ENCODE measurements at regions of chr1 and their contacts with region 1.

Region 1: GRCh38 chr1:40662864-40663263 is 2.6 kb downstream of the RIMS3 start:
- DNase-seq: no peak
- H3K4me3 ChIP-seq: no peak overlapping the region
- H3K27ac ChIP-seq: no peak overlapping the region
- H3K4me1 ChIP-seq: peaks cover 0 to 28% (median 15%) of the 10 kb centered on the region in 4 experiments; a peak in 6 of 7 replicates
- H3K27me3 ChIP-seq: no peaks in the 10 kb centered on the region; a peak in 1 of 7 replicates
- CTCF ChIP-seq: no peak
- EP300 ChIP-seq: no peak
- POLR2A ChIP-seq: no peak
- RAD21 ChIP-seq: no peak

Region 2: DNA sequence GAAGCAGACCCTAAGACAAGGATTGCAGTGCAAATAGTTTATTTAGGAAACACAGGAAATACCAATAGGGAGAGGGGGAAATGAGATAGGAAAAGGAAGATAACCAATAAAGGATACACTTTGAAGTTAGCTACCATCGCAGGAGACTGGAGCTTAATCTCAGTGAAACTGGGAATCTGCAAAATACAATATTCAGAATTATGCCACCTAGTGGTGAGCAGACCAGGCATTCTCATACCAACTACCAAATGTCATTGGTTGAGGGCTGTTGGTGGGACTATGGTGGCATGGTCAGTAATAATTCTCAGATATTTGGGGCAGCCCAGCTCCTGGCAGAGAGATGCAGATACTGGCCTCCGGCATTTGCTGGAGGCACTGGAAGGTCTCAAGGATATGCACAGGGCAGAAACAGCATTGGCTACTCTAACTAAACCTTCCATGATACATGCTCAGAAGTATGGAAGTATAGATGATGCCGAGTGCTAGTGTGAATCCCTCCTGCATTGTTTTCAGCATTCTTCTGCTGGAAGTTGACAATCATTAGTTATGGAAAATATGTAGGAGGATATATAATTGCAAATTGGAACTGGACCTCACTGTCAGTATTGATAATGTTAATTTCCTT is 224.4 kb before region 1 on chr1:
- CTCF ChIA-PET with region 1: no interaction called
- POLR2A ChIA-PET with region 1: no interaction called
- DNase-seq: no peak
- H3K4me3 ChIP-seq: no peak overlapping the region
- H3K27ac ChIP-seq: no peak overlapping the region
- H3K4me1 ChIP-seq: no peaks in the 10 kb centered on the region
- H3K27me3 ChIP-seq: no peaks in the 10 kb centered on the region
- CTCF ChIP-seq: peak; percentile 18 to 76 (median 53)
- EP300 ChIP-seq: no peak
- POLR2A ChIP-seq: no peak
- RAD21 ChIP-seq: peak; percentile 17 to 44; a peak in 3 of 4 replicates

Region 3: DNA sequence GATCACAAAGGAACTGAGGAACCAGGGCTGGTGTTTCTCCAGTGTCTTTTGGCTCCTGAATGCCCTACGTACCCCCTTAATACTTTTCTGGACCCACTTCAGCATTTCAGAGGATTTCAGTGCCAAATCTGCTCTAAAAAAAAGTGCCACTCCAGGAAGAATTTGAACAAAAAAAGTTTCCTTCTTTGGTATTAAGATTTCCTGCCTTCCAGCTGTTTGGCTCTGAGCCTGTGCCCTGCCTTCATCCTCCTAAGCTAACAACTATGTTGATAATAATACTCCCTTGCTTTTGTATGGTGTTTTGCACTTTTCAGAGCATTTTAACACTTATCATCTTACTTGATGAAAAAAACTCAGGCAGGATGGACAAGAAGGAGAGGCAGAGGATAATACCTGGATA is 13.6 kb after region 1 on chr1:
- CTCF ChIA-PET with region 1: interaction called, 12 read pairs
- POLR2A ChIA-PET with region 1: interaction called, 3 read pairs
- DNase-seq: no peak
- H3K4me3 ChIP-seq: no peak overlapping the region
- H3K27ac ChIP-seq: no peak overlapping the region
- H3K4me1 ChIP-seq: no peaks in the 10 kb centered on the region
- H3K27me3 ChIP-seq: no peaks in the 10 kb centered on the region
- CTCF ChIP-seq: no peak
- EP300 ChIP-seq: no peak
- POLR2A ChIP-seq: no peak
- RAD21 ChIP-seq: no peak

Region 4: DNA sequence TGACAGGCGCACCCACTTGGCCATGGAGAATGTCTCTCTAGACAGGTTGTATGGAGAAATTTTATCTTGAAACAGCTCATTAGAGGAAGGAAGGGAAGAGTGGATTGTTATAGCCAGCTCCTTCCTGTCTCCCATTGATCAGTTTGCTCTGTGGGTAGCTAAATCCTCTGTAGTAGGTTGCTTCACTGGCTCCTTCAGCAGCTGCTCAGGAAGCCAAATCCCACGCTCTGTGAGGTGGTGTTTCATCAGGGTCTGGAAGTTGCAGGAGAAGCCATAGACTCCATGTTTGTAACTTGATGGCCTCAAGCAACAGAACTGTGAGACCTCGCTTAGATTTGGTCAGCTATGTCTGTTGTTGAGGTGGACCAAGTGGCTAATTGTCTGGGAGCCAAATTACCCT is 21.8 kb after region 1 on chr1:
- CTCF ChIA-PET with region 1: interaction called, 4 read pairs
- POLR2A ChIA-PET with region 1: interaction called, 63 read pairs
- DNase-seq: no peak
- H3K4me3 ChIP-seq: no peak overlapping the region
- H3K27ac ChIP-seq: no peak overlapping the region
- H3K4me1 ChIP-seq: no peaks in the 10 kb centered on the region
- H3K27me3 ChIP-seq: no peaks in the 10 kb centered on the region
- CTCF ChIP-seq: no peak
- EP300 ChIP-seq: no peak
- POLR2A ChIP-seq: no peak
- RAD21 ChIP-seq: no peak